Activated CD4-positive, alpha-beta memory T cell treated with anti-CD3 and anti-CD28 coated beads for 36 hours (primary cell): ENCODE measurements at regions of chr11 and their contacts with region 1.

Region 1: GRCh38 chr11:68003846-68004550 is at the start of gene UNC93B1:
- DNase-seq: peak; percentile 91
- H3K4me3 Mint-ChIP-seq: peak within 1 kb of the TSS; percentile 76
- H3K27ac Mint-ChIP-seq: no peak within 1 kb of the TSS
- H3K4me1 Mint-ChIP-seq: peaks cover 15% of the 10 kb centered on the region
- H3K27me3 Mint-ChIP-seq: no peaks in the 10 kb centered on the region
- total RNA-seq, gene UNC93B1: 20.0 to 21.5 TPM

Region 2: DNA sequence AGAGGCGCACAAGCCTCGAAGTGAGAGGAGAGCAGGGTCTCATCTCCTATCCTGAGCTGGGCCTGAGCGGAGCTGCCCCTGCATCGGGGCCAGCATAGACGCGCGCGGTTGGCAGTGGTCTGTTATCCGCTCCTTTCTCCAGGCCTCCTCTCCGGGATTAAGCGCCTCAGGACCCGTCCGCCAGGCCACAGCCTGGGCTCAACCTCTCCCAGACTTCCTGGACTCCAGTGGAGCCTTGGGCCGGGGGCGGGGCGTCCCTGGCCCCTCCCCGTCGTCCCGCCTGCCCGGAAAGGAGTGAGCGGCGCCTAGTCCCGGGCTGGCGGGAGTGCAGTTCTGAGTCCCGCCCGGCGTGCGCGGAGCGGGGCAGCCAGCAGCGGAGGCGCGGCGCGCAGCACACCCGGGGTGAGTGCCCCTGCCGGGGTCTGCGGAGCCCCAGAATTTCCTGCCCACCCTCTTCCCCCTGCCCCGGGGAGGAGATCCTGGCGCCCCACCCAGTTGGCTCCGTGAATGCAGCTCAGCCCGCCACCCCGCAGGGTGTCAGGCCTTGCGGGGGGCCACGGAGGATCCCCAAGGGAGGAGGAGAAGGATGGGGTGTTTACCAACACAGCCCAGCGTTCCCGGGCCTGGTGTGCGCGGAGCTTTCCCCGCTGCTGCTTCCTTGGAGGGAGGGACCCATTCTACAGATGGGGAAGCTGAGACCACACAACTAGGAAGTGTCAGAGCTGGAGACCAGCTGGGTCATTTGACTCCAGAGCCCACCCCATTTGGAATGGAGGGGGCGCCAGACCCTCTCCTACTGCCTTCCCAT is 34.9 kb after region 1 on chr11 and contains the start of gene TCIRG1:
- CTCF ChIA-PET with region 1: no interaction called
- POLR2A ChIA-PET with region 1: no interaction called
- intact Hi-C with region 1: loop called (anchors 5 kb)
- DNase-seq: peak; percentile 80
- H3K4me3 Mint-ChIP-seq: peak within 1 kb of the TSS; percentile 91
- H3K27ac Mint-ChIP-seq: peak within 1 kb of the TSS; percentile 89
- H3K4me1 Mint-ChIP-seq: peaks cover 16% of the 10 kb centered on the region
- H3K27me3 Mint-ChIP-seq: no peaks in the 10 kb centered on the region
- total RNA-seq, gene TCIRG1: 167 to 175 TPM